Activated CD8-positive, alpha-beta T cell treated with anti-CD3 and anti-CD28 coated beads, Interleukin-2, amount 10 ng/mL, durations not matched to agents 7 days and 5 days (primary cell): ENCODE measurements at regions of chr2 and their contacts with region 1.

Region 1: DNA sequence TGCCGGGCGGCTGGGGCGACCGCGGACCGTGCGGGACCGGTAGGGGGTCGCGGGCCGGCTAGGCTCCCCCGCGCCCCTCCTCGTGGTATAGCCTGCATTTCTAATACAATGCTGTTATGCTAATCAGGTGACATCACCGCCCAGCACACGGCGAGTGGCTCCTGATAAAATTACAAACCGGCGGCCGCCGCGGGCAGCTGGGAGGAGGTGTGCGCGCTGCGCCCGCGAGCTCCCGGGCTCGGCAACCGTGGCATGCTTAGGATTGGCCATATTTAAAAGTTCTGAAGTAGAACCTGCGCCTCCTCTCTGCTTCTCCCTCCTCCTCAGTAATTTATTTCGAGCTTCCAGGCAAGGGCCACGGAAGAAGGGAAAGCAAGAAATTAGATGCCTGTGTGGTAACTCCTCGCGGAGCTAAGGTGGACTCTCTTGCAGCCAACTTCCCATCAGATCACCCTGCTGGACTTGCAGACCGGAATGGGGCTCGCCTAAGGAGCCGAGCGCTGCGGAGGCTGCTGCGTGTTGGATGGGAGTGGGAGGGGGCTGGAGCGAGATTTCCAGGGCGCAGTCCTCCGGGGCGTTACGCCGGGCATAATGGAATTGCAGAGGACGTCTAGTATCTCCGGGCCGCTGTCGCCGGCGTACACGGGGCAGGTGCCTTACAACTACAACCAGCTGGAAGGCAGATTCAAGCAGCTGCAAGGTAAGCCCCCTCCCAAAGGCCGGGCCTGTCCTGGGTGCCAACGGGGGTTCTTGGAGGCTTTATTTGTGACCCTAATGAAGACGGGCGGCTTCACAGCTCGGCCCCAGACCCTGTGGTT is 102.3 kb downstream of the SPTBN1 start:
- DNase-seq: peak; percentile 82
- ATAC-seq: peak; percentile 73
- H3K4me3 Mint-ChIP-seq: peak overlapping the region; percentile 93
- H3K27ac Mint-ChIP-seq: peak overlapping the region; percentile 90
- H3K4me1 Mint-ChIP-seq: peaks cover 42% of the 10 kb centered on the region
- H3K27me3 Mint-ChIP-seq: no peaks in the 10 kb centered on the region

Region 2: DNA sequence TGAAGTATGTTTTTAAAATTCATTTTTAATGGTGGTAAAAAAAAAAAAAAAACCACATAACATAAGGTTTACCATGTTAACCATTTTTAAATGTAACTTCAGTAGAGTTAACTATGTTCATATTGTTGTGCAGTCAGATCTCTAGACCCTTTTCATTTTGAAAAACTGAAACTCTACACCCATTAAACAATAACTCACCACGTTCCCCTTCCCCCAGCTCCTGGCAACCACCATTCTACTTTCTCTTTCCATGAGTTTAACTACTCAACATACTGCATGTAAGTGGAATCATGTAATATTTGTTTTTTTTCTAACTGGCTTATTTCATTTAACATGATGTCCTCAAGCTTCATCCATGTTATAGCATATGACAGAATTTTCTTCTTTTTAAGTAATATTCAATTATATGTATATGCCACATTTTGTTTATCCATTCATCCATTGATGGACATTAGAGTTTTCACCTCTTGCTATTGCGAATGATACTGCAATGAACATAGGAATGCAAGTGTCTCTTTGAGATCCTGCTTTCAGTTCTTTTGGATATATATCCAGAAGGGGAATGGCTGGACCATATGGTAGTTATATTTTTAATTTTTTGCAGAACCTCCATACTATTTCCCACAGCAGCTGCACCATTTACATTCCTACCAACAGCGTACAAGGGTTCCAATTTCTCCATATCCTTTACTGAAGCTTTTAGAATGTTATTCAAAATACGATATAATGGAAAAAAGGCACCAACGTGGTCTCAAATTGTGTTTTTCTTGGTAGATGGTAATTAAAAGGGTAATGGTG is 11.3 kb before region 1 on chr2:
- CTCF ChIA-PET with region 1: interaction called, 15 read pairs
- POLR2A ChIA-PET with region 1: interaction called, 16 read pairs
- DNase-seq: no peak
- ATAC-seq: no peak
- H3K4me3 Mint-ChIP-seq: no peak overlapping the region
- H3K27ac Mint-ChIP-seq: peak overlapping the region; percentile 9
- H3K4me1 Mint-ChIP-seq: peaks cover 9% of the 10 kb centered on the region
- H3K27me3 Mint-ChIP-seq: no peaks in the 10 kb centered on the region

Region 3: GRCh38 chr2:54579684-54580620 is 21.6 kb after region 1 on chr2:
- CTCF ChIA-PET with region 1: interaction called, 116 read pairs
- POLR2A ChIA-PET with region 1: interaction called, 258 read pairs
- DNase-seq: peak; percentile 62
- ATAC-seq: peak; percentile 79
- H3K4me3 Mint-ChIP-seq: peak overlapping the region; percentile 76
- H3K27ac Mint-ChIP-seq: peak overlapping the region; percentile 94
- H3K4me1 Mint-ChIP-seq: peaks cover 95% of the 10 kb centered on the region
- H3K27me3 Mint-ChIP-seq: no peaks in the 10 kb centered on the region

Region 4: DNA sequence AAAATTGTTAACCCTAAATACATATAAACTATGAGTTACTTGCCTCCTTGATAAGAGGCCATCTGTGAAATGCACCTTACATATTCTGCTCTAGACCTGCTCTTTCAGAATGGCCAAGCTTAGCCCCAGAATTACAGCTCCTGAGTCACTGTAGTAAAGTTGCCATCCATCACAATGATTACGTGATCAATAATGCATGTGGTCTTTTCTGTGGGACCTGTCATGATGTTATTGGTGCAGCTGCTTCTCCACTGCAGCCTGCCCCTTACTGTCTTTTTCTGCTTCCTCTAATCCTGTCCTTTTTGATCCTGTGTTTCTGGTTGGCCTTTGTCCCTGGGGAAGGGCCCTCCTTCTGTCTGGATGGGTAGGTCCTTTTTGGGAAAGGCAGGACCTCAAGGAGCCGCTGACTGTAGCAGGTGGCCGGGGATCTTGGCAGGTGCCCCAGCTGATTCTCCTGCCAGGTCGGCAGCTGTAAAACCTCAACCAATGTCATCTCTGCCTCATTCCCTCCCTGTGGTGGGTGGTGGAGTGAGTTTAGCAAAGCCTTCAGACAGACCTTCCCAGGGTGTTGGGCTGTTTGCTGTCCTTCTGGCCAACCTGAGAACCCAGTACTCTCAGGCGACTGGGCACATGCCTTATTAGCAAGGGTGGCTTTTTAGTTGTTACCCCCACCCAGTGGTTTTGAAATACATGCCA is 38.9 kb after region 1 on chr2:
- CTCF ChIA-PET with region 1: interaction called, 41 read pairs
- POLR2A ChIA-PET with region 1: interaction called, 47 read pairs
- DNase-seq: peak; percentile 48
- ATAC-seq: peak; percentile 45
- H3K4me3 Mint-ChIP-seq: peak overlapping the region; percentile 70
- H3K27ac Mint-ChIP-seq: peak overlapping the region; percentile 96
- H3K4me1 Mint-ChIP-seq: peaks cover 88% of the 10 kb centered on the region
- H3K27me3 Mint-ChIP-seq: no peaks in the 10 kb centered on the region

Region 5: GRCh38 chr2:54665436-54665856 is 107.0 kb after region 1 on chr2:
- CTCF ChIA-PET with region 1: interaction called, 15 read pairs
- POLR2A ChIA-PET with region 1: interaction called, 4 read pairs
- DNase-seq: peak; percentile 65
- ATAC-seq: peak; percentile 77
- H3K4me3 Mint-ChIP-seq: no peak overlapping the region
- H3K27ac Mint-ChIP-seq: peak overlapping the region; percentile 43
- H3K4me1 Mint-ChIP-seq: peaks cover 14% of the 10 kb centered on the region
- H3K27me3 Mint-ChIP-seq: no peaks in the 10 kb centered on the region

Region 6: GRCh38 chr2:54691445-54692135 is 133.2 kb after region 1 on chr2:
- CTCF ChIA-PET with region 1: no interaction called
- POLR2A ChIA-PET with region 1: no interaction called
- DNase-seq: no peak
- ATAC-seq: no peak
- H3K4me3 Mint-ChIP-seq: no peak overlapping the region
- H3K27ac Mint-ChIP-seq: no peak overlapping the region
- H3K4me1 Mint-ChIP-seq: peaks cover 18% of the 10 kb centered on the region
- H3K27me3 Mint-ChIP-seq: peaks cover 9% of the 10 kb centered on the region